ENCODE measurements at regions of chr14 and their contacts with region 1.

Region 1: DNA sequence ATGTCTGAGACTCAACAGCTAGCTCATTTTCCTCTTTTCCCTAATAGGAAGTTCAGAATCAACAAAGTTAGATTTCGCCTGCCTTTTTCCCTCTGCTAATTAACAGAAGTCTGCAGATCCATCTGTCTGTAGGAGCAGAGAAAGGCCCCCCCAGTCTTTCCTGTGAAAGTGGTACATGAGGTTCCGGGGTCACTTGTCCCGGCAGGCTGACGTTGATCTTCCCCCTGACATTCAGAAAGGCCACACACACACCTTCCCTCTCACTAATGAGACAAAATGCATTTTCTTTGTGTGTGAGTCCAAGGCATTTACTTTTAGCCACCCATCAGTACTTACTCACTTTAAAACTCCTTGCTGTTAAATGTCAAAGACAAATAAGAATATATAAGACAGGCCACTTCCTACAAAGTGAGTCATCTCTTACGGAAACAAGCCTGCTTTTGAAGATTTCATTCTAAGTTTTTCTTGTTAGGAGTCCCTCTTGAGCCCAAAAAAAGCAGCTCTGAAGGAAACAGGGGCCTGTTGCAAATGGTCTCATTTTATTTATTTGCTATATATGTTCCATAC is 138.7 kb downstream of the TTC7B start:
- DNase-seq: no peak
- ATAC-seq: no peak
- H3K4me3 ChIP-seq: no peak overlapping the region
- H3K27ac ChIP-seq: peak overlapping the region in 6 of 12 donors; percentile 11 to 70 (median 34)
- H3K4me1 ChIP-seq: peaks cover 0 to 57% (median 19%) of the 10 kb centered on the region in 12 donors
- H3K27me3 ChIP-seq: no peaks in the 10 kb centered on the region
- CTCF ChIP-seq: no peak
- POLR2A ChIP-seq: no peak

Region 2: DNA sequence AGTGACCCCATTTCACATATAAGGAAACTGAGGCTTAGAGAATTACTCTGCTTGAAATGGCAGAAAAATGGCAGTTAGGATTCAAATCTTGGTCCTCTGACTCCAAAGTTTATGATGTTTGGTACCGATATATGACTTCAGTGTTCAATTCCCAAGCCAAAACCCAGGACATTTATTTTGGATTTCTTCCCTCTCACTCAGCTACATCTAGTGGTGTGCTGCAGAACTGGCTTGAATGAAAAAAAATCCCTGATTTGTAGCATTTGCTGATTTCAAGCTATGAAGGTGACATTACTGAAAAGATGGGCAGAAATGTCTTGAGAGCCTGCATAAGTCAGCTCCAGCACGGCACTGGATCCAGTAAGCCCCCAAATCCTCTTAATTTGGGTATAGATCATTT is 829.4 kb before region 1 on chr14:
- intact Hi-C with region 1: no loop called
- DNase-seq: no peak
- ATAC-seq: no peak
- H3K4me3 ChIP-seq: no peak overlapping the region
- H3K27ac ChIP-seq: no peak overlapping the region
- H3K4me1 ChIP-seq: no peaks in the 10 kb centered on the region
- H3K27me3 ChIP-seq: no peaks in the 10 kb centered on the region
- CTCF ChIP-seq: peak in 7 of 12 donors; percentile 16 to 40 (median 31)
- POLR2A ChIP-seq: no peak

Region 3: GRCh38 chr14:90556012-90556477 is 121.5 kb before region 1 on chr14:
- intact Hi-C with region 1: loop called in 1 of 10 experiments (anchors 10 kb)
- DNase-seq: peak in 2 of 5 donors; percentile 67 to 71
- ATAC-seq: peak; percentile 59 to 80 (median 64)
- H3K4me3 ChIP-seq: peak overlapping the region in 6 of 12 donors; percentile 12 to 40 (median 34)
- H3K27ac ChIP-seq: peak overlapping the region in 11 of 12 donors; percentile 49 to 84 (median 72)
- H3K4me1 ChIP-seq: peaks cover 0 to 48% (median 12%) of the 10 kb centered on the region in 12 donors
- H3K27me3 ChIP-seq: no peaks in the 10 kb centered on the region
- CTCF ChIP-seq: no peak
- POLR2A ChIP-seq: no peak

Region 4: GRCh38 chr14:91009501-91010152 is 332.1 kb after region 1 on chr14:
- intact Hi-C with region 1: no loop called
- DNase-seq: no peak
- ATAC-seq: peak in 3 of 4 donors; percentile 55 to 64 (median 61)
- H3K4me3 ChIP-seq: no peak overlapping the region
- H3K27ac ChIP-seq: peak overlapping the region in 2 of 12 donors; percentile 7 to 86
- H3K4me1 ChIP-seq: peaks cover 0 to 62% (median 0%) of the 10 kb centered on the region in 12 donors
- H3K27me3 ChIP-seq: no peaks in the 10 kb centered on the region
- CTCF ChIP-seq: no peak
- POLR2A ChIP-seq: no peak